Psoas muscle (tissue), 8 donors: ENCODE measurements at regions of chr3 and their contacts with region 1.

Region 1: DNA sequence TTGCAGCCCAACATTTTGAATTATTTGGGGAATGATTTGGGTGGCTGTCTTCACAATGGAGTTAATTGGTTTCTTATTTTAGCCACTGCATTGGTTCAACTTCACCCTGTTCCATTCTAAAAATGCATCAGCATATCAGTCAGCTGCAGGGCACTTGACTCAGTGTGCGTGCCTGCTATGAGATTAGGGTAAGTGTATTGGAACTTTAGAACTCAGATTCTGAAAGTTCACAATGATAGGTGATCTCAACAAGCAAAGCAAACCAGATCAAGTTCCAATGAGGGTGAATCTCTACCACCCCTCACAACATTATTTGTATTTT is 265.0 kb downstream of the ZPLD1 start:
- DNase-seq: no peak
- ATAC-seq: no peak
- H3K4me3 ChIP-seq: no peak overlapping the region
- H3K27ac ChIP-seq: no peak overlapping the region
- H3K4me1 ChIP-seq: no peaks in the 10 kb centered on the region
- H3K27me3 ChIP-seq: no peaks in the 10 kb centered on the region
- CTCF ChIP-seq: no peak

Region 2: GRCh38 chr3:102415553-102415952 is 284.2 kb before region 1 on chr3:
- intact Hi-C with region 1: no loop called
- DNase-seq: no peak
- ATAC-seq: no peak
- H3K4me3 ChIP-seq: peak overlapping the region; percentile 20
- H3K27ac ChIP-seq: no peak overlapping the region
- H3K4me1 ChIP-seq: no peaks in the 10 kb centered on the region
- H3K27me3 ChIP-seq: no peaks in the 10 kb centered on the region
- CTCF ChIP-seq: no peak

Region 3: DNA sequence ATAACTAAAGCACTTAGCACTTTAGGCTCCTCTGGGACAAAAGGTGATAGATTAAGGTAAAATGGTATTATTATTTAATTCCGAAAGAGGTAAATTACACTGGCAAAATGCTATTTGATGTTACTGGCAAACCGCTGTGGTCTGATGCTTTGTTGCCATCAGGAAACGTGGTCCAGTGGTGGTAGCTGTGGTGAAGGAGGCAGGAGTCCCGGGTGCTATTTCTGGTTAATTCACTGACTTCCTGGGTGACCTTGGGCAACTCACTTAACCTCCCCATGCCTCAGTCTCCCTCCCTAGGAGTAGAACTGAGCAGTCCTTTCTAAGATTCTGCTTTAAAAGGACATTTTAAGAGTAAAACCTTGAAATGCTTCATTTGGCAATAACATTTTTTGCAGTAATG is 31.5 kb before region 1 on chr3:
- intact Hi-C with region 1: loop called in 1 of 2 experiments (anchors 1 kb)
- DNase-seq: no peak
- ATAC-seq: no peak
- H3K4me3 ChIP-seq: no peak overlapping the region
- H3K27ac ChIP-seq: no peak overlapping the region
- H3K4me1 ChIP-seq: no peaks in the 10 kb centered on the region
- H3K27me3 ChIP-seq: peaks cover 0 to 5% (median 0%) of the 10 kb centered on the region in 3 donors
- CTCF ChIP-seq: no peak

Region 4: DNA sequence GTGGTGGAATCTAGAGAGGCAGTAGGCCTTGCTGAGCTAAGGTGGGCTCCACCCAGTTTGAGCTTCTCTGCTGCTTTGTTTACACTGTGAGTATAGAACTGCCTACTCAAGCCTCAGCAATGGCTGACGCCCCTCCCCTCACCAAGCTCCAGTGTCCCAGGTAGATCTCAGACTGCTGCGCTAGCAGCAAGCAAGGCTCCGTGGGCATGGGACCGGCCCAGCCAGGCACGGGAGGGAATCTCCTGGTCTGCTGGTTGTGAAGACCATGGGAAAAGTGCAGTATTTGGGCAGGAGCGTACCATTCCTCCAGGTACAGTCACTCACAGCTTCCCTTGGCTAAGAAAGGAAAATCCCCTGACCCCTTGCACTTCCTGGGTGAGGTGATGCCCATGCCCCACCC is 142.1 kb after region 1 on chr3:
- intact Hi-C with region 1: no loop called
- DNase-seq: no peak
- ATAC-seq: no peak
- H3K4me3 ChIP-seq: no peak overlapping the region
- H3K27ac ChIP-seq: no peak overlapping the region
- H3K4me1 ChIP-seq: no peaks in the 10 kb centered on the region
- H3K27me3 ChIP-seq: no peaks in the 10 kb centered on the region
- CTCF ChIP-seq: no peak

Region 5: DNA sequence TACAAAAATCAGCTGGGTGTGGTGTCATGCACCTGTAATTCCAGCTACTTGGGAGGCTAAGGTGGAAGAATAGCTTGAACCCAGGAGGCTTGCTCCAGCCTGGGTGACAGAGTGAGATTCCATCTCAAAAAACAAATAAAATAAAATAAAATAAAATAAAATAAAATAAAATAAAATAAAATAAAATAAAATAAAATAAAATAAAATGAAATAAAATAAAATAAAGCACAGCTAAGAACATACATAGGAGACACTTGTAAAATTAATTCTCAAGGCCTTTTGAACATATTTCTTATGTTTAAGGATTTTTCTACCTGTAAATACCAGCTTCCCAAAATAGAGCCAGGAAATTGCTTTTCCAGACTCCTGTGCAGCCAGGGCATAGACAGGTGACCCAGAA is 438.1 kb after region 1 on chr3:
- intact Hi-C with region 1: no loop called
- DNase-seq: no peak
- ATAC-seq: no peak
- H3K4me3 ChIP-seq: no peak overlapping the region
- H3K27ac ChIP-seq: no peak overlapping the region
- H3K4me1 ChIP-seq: no peaks in the 10 kb centered on the region
- H3K27me3 ChIP-seq: no peaks in the 10 kb centered on the region
- CTCF ChIP-seq: no peak